Adrenal gland (tissue), 19 donors: ENCODE measurements at regions of chr5 and their contacts with region 1.

Region 1: DNA sequence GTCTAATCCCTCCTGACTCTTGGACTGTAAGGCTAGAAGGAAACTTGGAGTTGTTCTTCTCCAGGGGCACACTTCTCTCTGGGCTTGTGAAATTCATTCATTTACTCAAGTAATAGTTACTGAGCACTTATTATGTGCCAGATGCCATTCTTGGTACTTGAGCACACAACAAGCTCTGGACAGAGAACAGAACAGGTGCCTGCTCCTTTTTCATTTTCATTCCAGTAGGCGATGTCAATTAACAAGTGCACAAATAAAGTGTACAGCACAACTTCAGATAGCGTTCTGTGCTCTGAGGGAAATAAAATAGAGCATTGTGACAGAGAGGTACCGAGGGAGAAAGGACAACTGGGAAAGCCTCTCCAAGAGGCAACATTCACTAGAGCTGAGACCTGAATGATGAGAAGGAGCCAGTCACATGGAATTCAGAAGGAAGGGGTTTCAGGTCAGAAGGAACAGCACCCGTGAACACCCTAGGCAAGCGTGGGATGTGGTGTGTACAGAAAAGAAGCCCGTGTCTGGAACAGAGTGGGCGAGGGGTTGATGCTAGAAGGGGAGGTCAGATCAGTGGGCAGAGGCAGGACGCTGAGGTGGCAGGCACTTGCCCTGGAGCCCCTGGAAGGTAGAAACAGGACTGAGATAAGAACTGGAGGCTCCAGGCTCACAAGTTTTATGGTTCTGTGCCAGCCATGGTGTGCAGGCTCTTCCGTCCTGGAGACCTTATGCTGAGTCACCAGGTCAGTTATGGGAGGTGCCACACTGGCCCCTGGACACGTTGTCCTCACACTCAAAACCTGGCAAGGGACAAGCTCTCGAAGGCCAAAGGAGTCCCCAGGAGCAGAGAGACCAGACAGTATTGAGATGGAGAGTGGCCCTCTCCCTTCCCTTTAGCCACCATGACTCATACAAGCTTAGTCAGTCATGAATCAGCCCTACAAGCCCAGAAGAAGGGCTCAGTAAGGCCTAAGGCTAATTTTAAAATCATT is 7.2 kb upstream of the ABLIM3 start:
- DNase-seq: peak; percentile 76 to 96 (median 91)
- H3K4me3 ChIP-seq: no peak overlapping the region
- H3K27ac ChIP-seq: peak overlapping the region in 3 of 5 donors; percentile 30 to 42 (median 36)
- H3K4me1 ChIP-seq: peaks cover 0 to 14% of the 10 kb centered on the region in 2 donors
- H3K27me3 ChIP-seq: no peaks in the 10 kb centered on the region
- CTCF ChIP-seq: no peak
- POLR2A ChIP-seq: no peak

Region 2: GRCh38 chr5:148949841-148950470 is 184.1 kb before region 1 on chr5:
- intact Hi-C with region 1: no loop called
- DNase-seq: no peak
- H3K4me3 ChIP-seq: no peak overlapping the region
- H3K27ac ChIP-seq: no peak overlapping the region
- H3K4me1 ChIP-seq: no peaks in the 10 kb centered on the region
- H3K27me3 ChIP-seq: no peaks in the 10 kb centered on the region
- CTCF ChIP-seq: no peak
- POLR2A ChIP-seq: no peak

Region 3: GRCh38 chr5:149561848-149562247 is 427.8 kb after region 1 on chr5:
- intact Hi-C with region 1: loop called in 1 of 2 experiments (anchors 10 kb)
- DNase-seq: peak in 2 of 7 donors; percentile 41 to 48
- H3K4me3 ChIP-seq: peak overlapping the region in 1 of 4 donors; percentile 20
- H3K27ac ChIP-seq: peak overlapping the region; percentile 59 to 85 (median 73)
- H3K4me1 ChIP-seq: peaks cover 14 to 31% of the 10 kb centered on the region in 2 donors
- H3K27me3 ChIP-seq: no peaks in the 10 kb centered on the region
- CTCF ChIP-seq: no peak
- POLR2A ChIP-seq: peak in 1 of 2 donors; percentile 37